Naive thymus-derived CD4-positive, alpha-beta T cell (primary cell): ENCODE measurements at regions of chr12 and their contacts with region 1.

Region 1: GRCh38 chr12:54749191-54749818 is 101.1 kb upstream of the DCD start:
- DNase-seq: peak in 7 of 9 donors; percentile 33 to 73 (median 63)
- ATAC-seq: peak; percentile 91
- H3K4me3 ChIP-seq: no peak overlapping the region
- H3K4me3 Mint-ChIP-seq: peak overlapping the region in 8 of 10 donors; percentile 24 to 79 (median 62)
- H3K27ac ChIP-seq: no peak overlapping the region
- H3K27ac Mint-ChIP-seq: peak overlapping the region in 6 of 9 donors; percentile 33 to 84 (median 55)
- H3K4me1 ChIP-seq: peaks cover 4 to 16% of the 10 kb centered on the region in 2 donors
- H3K4me1 Mint-ChIP-seq: peaks cover 10 to 38% (median 30%) of the 10 kb centered on the region in 7 donors
- H3K27me3 ChIP-seq: no peaks in the 10 kb centered on the region
- H3K27me3 Mint-ChIP-seq: peaks cover 0 to 26% (median 0%) of the 10 kb centered on the region in 5 donors

Region 2: DNA sequence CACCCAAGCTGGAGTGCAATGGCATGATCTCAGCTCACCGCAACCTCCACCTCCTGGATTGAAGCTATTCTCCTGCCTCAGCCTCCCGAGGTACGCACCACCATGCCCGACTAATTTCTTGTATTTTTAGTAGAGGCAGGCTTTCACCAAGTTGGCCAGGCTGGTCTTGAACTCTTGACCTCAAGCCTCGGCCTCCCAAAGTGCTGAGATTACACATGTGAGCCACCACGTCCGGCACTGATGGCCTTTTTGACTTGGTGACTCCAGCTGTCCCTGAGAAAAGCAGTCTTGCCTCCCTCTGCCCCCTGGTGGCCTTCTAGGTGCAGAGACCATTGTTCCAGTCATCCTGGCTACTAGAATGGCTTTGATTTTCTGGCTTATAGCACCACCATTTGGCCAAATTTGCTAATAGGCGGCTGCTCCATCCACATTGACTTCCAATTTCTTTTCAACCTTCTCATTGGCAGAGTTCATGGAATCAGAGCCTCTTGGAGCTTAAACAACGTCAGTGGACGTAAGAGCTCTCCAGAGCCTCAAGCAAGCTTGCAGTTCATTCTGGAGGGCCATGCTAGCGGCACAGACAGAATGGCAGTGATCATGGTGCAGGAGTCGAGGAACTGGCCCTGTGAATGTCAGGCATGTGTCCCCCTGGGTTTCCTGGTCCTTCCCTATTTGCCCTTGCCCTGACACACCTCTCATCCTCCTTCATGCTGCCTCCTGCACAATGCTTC is 1768.4 kb before region 1 on chr12:
- CTCF ChIA-PET with region 1: no interaction called
- POLR2A ChIA-PET with region 1: no interaction called
- intact Hi-C with region 1: no loop called
- DNase-seq: peak; percentile 53 to 85 (median 79)
- ATAC-seq: peak; percentile 98
- H3K4me3 ChIP-seq: no peak overlapping the region
- H3K4me3 Mint-ChIP-seq: no peak overlapping the region
- H3K27ac ChIP-seq: no peak overlapping the region
- H3K27ac Mint-ChIP-seq: peak overlapping the region in 1 of 9 donors; percentile 17
- H3K4me1 ChIP-seq: no peaks in the 10 kb centered on the region
- H3K4me1 Mint-ChIP-seq: peaks cover 0 to 7% (median 0%) of the 10 kb centered on the region in 7 donors
- H3K27me3 ChIP-seq: no peaks in the 10 kb centered on the region
- H3K27me3 Mint-ChIP-seq: peaks cover 23 to 44% (median 26%) of the 10 kb centered on the region in 5 donors

Region 3: DNA sequence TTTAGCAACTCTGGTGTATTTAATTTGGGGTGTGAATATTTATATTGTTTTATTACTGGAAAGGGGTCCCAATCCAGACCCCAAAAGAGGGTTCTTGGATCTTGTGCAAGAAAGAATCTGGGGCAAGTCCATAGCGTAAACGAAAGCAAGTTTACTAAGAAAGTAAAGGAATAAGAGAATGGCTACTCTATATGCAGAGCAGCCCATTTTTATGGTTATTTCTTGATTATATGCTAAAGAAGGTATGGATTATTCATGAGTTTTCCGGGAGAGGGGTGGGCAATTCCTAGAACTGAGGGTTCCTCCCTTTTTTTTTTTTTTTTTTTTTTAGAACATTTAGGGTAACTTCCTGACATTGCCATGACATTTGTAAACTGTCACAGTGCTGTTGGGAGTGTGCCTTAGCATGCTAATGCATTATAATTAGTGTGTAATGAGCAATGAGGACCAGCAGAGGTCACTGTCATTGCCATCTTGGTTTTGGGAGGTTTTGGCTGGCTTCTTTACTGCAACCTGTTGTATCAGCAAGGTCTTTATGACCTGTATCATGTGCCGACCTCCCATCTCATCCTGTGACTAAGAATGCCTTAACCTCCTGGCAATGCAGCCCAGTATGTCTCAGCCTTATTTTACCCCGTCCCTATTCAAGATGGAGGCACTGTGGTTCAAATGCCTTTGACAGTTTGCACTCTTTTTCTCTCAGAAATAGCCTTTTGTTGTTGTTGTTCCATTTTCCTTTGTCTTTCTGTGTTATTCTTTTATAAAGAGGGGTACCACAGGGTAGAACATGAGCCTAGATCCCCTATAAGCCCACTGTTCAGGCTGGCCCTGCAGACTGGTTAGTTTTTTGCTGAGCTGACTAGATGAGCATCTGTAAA is 25.7 kb before region 1 on chr12:
- CTCF ChIA-PET with region 1: interaction called, 26 read pairs
- POLR2A ChIA-PET with region 1: interaction called, 4 read pairs
- intact Hi-C with region 1: loop called in 1 of 2 experiments (anchors 1 kb)
- DNase-seq: peak in 7 of 9 donors; percentile 21 to 50 (median 35)
- ATAC-seq: peak; percentile 73
- H3K4me3 ChIP-seq: no peak overlapping the region
- H3K4me3 Mint-ChIP-seq: no peak overlapping the region
- H3K27ac ChIP-seq: no peak overlapping the region
- H3K27ac Mint-ChIP-seq: peak overlapping the region in 1 of 9 donors; percentile 18
- H3K4me1 ChIP-seq: no peaks in the 10 kb centered on the region
- H3K4me1 Mint-ChIP-seq: peaks cover 2 to 24% (median 10%) of the 10 kb centered on the region in 7 donors
- H3K27me3 ChIP-seq: no peaks in the 10 kb centered on the region
- H3K27me3 Mint-ChIP-seq: peaks cover 0 to 29% (median 8%) of the 10 kb centered on the region in 5 donors

Region 4: DNA sequence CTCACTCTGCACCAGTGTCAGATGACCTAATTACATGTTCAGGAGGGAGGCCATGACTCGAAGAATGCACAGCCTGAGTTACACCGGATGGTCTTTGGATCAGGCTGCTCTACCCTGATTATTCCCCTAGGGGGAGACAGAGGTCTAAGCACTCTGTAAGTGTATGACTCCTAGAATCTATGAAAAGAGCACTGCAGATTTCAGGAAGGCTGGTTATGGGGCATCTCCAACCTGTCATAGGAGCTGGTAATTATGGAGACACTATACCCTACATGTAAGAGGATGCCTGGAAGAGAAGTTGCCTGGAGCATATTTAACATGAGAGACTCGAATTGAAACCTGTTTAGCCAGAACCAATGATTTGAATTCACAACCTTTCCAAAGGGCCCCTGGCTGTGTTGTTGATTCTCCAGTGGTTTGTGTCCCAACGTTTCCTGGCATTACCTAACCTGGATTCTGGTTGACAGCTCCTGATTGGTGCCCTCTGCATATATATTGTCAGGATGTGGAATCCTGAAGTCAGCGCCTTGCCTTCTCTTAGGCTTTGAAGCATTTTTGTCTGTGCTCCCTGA is 104.8 kb after region 1 on chr12 and contains the start of gene MUCL1:
- CTCF ChIA-PET with region 1: interaction called, 8 read pairs
- POLR2A ChIA-PET with region 1: no interaction called
- intact Hi-C with region 1: loop called (anchors 1 kb)
- DNase-seq: peak; percentile 21 to 79 (median 73)
- ATAC-seq: peak; percentile 99
- H3K4me3 ChIP-seq: no peak within 1 kb of the TSS
- H3K4me3 Mint-ChIP-seq: no peak within 1 kb of the TSS
- H3K27ac ChIP-seq: no peak within 1 kb of the TSS
- H3K27ac Mint-ChIP-seq: peak within 1 kb of the TSS in 2 of 9 donors; percentile 44 to 70
- H3K4me1 ChIP-seq: no peaks in the 10 kb centered on the region
- H3K4me1 Mint-ChIP-seq: peaks cover 0 to 12% (median 5%) of the 10 kb centered on the region in 7 donors
- H3K27me3 ChIP-seq: no peaks in the 10 kb centered on the region
- H3K27me3 Mint-ChIP-seq: peaks cover 0 to 4% (median 0%) of the 10 kb centered on the region in 5 donors
- total RNA-seq, gene MUCL1: not detected

Region 5: GRCh38 chr12:54958048-54958658 is 208.8 kb after region 1 on chr12:
- CTCF ChIA-PET with region 1: interaction called, 77 read pairs
- POLR2A ChIA-PET with region 1: interaction called, 7 read pairs
- intact Hi-C with region 1: loop called (anchors 1 kb)
- DNase-seq: peak in 7 of 9 donors; percentile 28 to 66 (median 58)
- ATAC-seq: peak; percentile 73
- H3K4me3 ChIP-seq: no peak overlapping the region
- H3K4me3 Mint-ChIP-seq: peak overlapping the region in 7 of 10 donors; percentile 1 to 65 (median 40)
- H3K27ac ChIP-seq: peak overlapping the region; percentile 0
- H3K27ac Mint-ChIP-seq: peak overlapping the region; percentile 5 to 94 (median 77)
- H3K4me1 ChIP-seq: peaks cover 33 to 69% of the 10 kb centered on the region in 2 donors
- H3K4me1 Mint-ChIP-seq: peaks cover 64 to 100% (median 95%) of the 10 kb centered on the region in 7 donors
- H3K27me3 ChIP-seq: no peaks in the 10 kb centered on the region
- H3K27me3 Mint-ChIP-seq: no peaks in the 10 kb centered on the region

Region 6: DNA sequence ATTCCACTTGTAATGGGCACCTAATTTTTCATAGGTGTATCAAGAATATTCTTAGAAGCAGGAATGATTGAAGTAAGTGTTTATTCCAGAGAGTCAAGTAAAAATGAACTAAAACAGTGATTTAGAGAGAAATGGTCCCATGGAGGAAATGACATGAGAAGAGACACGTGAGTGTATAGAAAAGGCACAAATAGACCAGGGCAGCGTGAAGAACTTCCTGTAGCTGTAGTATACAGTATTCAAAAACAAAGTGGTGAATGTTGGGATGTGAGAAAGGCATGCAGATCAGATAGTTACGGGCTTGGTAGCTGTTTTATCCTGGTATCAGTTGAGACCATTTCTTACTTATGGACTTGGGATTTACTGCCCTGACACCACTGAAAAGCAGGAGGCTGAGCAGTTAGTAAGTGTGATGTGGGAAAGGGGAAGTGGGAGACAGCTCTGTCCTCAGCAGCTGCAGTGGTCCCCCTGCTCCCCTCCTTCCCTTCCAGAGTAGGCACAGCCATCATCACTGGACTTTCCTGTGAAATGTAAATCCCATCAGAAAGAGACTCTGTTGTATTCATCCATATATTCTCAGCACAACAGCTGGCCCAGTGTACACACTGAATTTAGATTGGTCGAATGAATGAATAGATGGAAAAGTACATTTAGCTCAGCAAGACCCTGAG is 252.0 kb after region 1 on chr12:
- CTCF ChIA-PET with region 1: interaction called, 11 read pairs
- POLR2A ChIA-PET with region 1: no interaction called
- intact Hi-C with region 1: no loop called
- DNase-seq: no peak
- ATAC-seq: peak; percentile 59
- H3K4me3 ChIP-seq: no peak overlapping the region
- H3K4me3 Mint-ChIP-seq: peak overlapping the region in 8 of 10 donors; percentile 1 to 81 (median 59)
- H3K27ac ChIP-seq: peak overlapping the region; percentile 11
- H3K27ac Mint-ChIP-seq: peak overlapping the region in 8 of 9 donors; percentile 53 to 83 (median 72)
- H3K4me1 ChIP-seq: peaks cover 0 to 16% of the 10 kb centered on the region in 2 donors
- H3K4me1 Mint-ChIP-seq: peaks cover 8 to 33% (median 21%) of the 10 kb centered on the region in 7 donors
- H3K27me3 ChIP-seq: no peaks in the 10 kb centered on the region
- H3K27me3 Mint-ChIP-seq: peaks cover 0 to 5% (median 0%) of the 10 kb centered on the region in 5 donors